ENCODE measurements at regions of chr2 and their contacts with region 1.

Region 1: DNA sequence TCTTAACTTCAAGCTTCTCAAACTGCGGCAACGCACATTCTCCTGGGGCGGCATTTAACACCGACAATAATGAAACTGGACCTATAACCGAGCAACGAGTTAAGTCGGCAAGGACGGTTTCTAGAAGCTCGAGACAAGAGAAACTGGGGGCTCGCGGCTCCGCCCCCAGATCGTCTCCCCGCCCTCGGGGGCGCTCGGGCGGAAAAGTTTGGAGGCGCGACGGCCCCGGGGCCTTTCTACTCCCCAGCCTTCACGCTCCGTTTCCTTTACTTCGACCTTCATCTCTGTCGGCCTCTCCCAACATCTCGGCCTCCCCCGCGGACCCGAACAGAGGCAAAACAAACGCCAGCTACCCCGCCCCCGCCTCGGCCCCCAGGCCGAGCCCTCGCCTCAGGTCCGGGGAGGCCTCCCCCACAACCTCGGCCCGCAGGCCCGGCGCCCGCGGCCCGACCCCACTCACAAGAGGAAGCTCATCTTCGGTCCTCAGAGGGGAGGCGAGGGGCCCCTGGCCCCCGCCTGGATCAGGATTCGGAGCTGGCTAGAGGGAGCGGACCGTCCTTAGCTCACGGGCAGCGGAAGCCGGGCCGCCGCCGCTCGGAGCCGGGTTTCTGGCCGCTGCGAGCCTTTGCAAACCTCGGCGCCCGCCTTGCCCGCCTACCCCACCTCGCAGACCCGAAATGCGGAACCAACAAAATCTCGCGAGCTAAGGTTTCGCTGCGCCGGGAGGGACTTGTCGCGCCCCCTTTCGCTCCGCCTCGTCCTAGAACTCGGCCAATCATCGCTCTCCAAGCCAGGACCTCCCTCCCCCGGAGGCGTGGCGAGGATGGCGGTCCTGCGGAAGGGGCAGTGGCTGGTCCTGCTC is at the start of gene MOB1A:
- DNase-seq: peak; percentile 99
- ATAC-seq: peak; percentile 93
- H3K4me3 Mint-ChIP-seq: peak within 1 kb of the TSS; percentile 86
- H3K27ac Mint-ChIP-seq: peak within 1 kb of the TSS; percentile 94
- H3K4me1 Mint-ChIP-seq: peaks cover 44% of the 10 kb centered on the region
- H3K27me3 Mint-ChIP-seq: no peaks in the 10 kb centered on the region
- total RNA-seq, gene MOB1A: 183 to 220 TPM

Region 2: DNA sequence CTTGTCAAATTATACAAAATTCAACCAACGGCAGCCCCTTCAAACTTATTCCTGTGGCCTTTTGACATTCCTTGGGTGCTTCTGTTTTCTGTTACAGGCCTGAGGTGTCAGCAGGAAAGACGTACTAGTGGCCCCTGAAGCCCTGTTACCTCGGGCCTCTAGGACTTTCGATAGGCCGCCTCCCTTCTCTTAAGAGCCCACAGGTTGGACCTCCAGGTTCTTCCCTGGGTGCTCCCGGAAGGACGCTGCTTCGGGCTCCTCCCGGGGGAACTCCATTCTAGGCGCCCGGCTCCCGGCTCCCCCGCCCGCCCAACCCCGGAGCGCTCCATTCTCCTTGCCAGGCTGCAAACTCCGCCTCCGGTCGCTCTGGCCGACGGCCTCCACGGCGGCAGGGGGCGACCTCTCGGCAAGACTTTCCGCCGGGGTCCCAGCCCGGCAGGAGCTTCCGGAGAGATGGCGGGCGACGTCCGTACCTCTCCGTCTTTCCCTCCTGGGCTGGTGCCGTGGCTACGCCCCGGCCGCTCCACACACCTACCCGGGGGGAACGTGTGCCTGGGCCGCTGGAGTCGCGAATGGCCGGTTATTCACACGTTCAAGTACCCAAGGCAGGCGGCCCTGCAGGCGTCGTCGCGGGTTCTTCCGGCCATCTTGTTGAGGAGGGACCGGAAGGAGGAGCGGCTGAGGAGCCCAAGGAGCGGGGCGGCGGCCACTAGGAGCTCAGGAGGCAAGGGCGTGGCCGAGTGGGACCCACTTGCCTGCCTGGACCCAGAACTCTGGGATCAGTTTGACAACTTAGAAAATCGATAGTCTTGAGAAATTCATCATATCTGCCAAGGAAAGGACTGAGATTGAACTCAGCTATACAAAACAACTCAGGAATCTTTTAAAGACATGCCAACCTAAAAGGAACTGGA is 58.3 kb before region 1 on chr2:
- CTCF ChIA-PET with region 1: interaction called, 12 read pairs
- DNase-seq: peak; percentile 91
- ATAC-seq: peak; percentile 99
- H3K4me3 Mint-ChIP-seq: peak overlapping the region; percentile 83
- H3K27ac Mint-ChIP-seq: peak overlapping the region; percentile 94
- H3K4me1 Mint-ChIP-seq: peaks cover 12% of the 10 kb centered on the region
- H3K27me3 Mint-ChIP-seq: no peaks in the 10 kb centered on the region

Region 3: DNA sequence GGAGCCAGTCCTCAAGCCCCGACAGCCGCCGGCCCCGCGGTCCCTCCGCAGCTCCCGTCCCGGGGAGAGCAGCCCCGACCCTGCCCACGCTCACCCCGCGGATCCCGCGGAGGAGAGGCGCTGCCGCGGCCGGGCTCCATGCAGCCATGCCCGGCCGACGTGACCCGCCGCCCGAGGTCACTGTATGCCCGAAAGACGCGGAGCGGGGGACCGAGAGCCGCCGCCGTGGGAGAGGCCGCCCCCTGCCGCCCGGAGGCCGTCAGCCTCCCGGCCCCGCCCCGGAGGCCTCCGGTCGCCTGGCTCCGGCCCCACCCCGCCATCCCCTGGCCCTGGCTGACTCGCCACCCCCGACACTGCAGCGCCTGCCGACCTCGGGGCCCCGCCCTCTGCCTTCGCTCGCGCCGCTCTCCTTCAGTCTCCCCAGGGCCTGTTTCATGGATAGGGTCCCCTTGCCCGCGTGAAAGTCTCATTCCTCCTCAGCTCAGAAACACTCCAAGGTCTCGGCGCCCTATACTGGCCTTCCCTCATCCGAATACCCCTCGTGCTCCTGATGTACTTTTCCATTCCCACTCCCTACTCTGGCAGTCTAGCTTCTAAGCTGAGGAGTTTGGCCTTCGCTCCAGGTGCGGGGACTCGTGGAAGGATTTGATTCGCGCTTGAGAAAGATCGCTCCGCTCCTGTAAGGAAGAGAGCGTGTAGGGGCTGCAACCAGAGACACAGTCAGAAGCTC is 30.5 kb before region 1 on chr2 and contains the start of gene BOLA3:
- CTCF ChIA-PET with region 1: interaction called, 15 read pairs
- DNase-seq: peak; percentile 92
- ATAC-seq: peak; percentile 98
- H3K4me3 Mint-ChIP-seq: no peak within 1 kb of the TSS
- H3K27ac Mint-ChIP-seq: no peak within 1 kb of the TSS
- H3K4me1 Mint-ChIP-seq: peaks cover 4% of the 10 kb centered on the region
- H3K27me3 Mint-ChIP-seq: no peaks in the 10 kb centered on the region
- total RNA-seq, gene BOLA3: 69.5 to 76.1 TPM

Region 4: DNA sequence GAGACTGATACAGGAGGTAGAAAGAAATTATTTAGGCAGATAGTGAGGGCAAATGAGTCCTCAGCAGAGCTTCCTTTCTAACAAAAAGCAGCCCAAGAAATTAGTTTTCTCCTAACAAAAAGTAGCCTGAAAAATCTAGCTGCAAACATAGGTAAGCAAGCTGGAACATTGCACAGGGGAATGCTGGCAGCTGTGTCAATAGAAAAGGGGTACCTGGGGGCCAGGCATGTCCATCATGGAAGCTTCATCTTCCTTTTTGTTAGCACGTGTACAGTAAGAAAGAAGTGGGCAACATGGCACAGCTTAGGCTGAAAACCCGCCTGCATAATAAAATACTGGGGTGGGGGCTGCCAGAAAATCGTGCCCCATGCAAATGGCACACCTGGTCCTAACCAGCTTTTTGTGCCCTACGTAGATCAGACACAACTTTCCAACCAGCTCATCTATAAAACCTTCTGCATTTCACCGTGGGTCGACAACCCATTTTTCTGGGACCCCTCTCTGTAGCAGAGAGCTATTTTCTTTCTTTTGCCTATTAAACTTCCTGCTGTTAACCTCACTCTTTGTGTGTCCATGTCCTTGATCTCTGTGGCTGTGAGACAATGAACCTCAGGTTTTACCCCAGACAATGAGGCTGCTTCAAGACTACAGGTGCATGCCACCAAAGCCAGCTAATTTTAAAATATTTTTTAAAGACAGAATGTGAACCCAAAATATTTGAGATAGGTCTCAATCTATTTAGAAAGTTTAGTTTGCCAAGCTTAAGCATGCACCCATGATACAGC is 13.4 kb after region 1 on chr2:
- CTCF ChIA-PET with region 1: interaction called, 51 read pairs
- DNase-seq: no peak
- ATAC-seq: no peak
- H3K4me3 Mint-ChIP-seq: no peak overlapping the region
- H3K27ac Mint-ChIP-seq: no peak overlapping the region
- H3K4me1 Mint-ChIP-seq: peaks cover 9% of the 10 kb centered on the region
- H3K27me3 Mint-ChIP-seq: peaks cover 3% of the 10 kb centered on the region

Region 5: DNA sequence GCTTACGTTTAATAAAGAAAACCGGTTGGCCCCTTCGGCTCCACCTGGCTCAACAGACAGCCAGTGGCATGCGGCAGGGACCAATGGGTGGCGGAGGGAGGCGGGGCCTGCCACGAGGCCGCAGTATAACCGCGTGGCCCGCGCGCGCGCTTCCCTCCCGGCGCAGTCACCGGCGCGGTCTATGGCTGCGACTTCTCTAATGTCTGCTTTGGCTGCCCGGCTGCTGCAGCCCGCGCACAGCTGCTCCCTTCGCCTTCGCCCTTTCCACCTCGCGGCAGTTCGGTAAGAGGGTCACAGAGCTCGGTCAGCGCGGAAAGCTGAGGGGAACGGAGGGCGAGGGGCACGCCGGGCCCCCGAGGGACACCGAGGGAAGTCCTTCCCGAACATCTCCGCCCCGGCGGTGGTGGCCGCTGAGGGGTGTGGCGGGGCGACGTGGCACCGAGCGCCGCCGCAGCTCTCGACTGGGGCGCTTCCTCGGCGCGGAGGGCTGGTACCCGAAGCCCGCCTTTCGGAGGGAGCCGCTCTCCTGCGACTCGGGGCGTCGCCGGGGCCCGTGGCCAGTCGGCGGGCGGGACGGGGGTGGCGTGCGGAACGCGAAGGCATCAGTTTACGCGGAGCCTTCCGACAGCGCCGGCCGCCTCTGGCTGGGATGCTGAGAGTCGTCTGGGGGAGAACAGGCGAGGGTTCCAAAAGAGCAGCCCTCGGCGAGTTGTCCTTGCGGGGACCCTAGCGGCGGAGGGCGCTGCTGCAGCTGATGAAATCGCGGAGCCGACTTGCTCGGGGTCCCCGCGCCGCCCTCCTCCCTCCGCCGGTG is 20.2 kb after region 1 on chr2 and contains the start of gene MTHFD2:
- CTCF ChIA-PET with region 1: interaction called, 51 read pairs
- DNase-seq: peak; percentile 97
- ATAC-seq: peak; percentile 88
- H3K4me3 Mint-ChIP-seq: peak within 1 kb of the TSS; percentile 96
- H3K27ac Mint-ChIP-seq: peak within 1 kb of the TSS; percentile 100
- H3K4me1 Mint-ChIP-seq: peaks cover 45% of the 10 kb centered on the region
- H3K27me3 Mint-ChIP-seq: no peaks in the 10 kb centered on the region
- total RNA-seq, gene MTHFD2: 215 to 293 TPM

Region 6: DNA sequence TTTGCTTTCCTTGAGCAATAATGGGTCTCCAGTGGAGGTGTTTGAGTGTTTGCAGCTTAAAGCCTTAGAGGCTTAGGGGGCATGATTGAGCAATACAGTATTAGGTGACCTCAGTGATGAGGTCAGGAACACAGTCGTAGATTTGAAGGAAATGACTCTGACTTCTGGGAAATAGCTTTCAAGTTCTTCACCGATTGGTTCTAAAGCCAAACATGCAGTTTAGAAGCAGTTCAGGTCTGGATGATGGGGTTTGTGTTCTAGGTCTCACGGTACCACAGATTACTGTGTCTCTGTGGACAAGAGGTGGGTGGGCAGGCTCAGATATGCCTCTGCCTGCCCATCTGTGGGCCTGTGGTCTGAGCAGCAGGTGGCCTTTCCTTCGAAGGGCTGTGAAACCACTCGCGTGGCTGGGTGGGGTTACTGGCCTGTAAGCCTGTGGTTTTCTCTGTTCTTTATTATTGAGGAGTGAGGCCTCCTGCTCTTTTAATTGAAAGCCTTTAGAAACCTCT is 27.8 kb after region 1 on chr2:
- CTCF ChIA-PET with region 1: interaction called, 26 read pairs
- DNase-seq: peak; percentile 85
- ATAC-seq: peak; percentile 86
- H3K4me3 Mint-ChIP-seq: peak overlapping the region; percentile 65
- H3K27ac Mint-ChIP-seq: peak overlapping the region; percentile 94
- H3K4me1 Mint-ChIP-seq: peaks cover 73% of the 10 kb centered on the region
- H3K27me3 Mint-ChIP-seq: no peaks in the 10 kb centered on the region